CD8-positive, alpha-beta T cell (primary cell): ENCODE measurements at regions of chr13 and their contacts with region 1.

Region 1: GRCh38 chr13:113742000-113742441 is 17.0 kb upstream of the TMEM255B start:
- DNase-seq: peak in 6 of 9 experiments; percentile 8 to 58 (median 32)
- ATAC-seq: peak; percentile 41
- H3K4me3 ChIP-seq: peak overlapping the region in 1 of 2 experiments; percentile 33
- H3K4me3 Mint-ChIP-seq: peak overlapping the region; percentile 64
- H3K27ac ChIP-seq: no peak overlapping the region
- H3K27ac Mint-ChIP-seq: peak overlapping the region; percentile 79
- H3K4me1 ChIP-seq: peaks cover 24% of the 10 kb centered on the region
- H3K4me1 Mint-ChIP-seq: peaks cover 25% of the 10 kb centered on the region
- H3K27me3 ChIP-seq: peaks cover 10 to 18% of the 10 kb centered on the region in 2 experiments
- H3K27me3 Mint-ChIP-seq: peaks cover 17% of the 10 kb centered on the region
- CTCF ChIP-seq: peak; percentile 25

Region 2: GRCh38 chr13:113758651-113759524 is 16.9 kb after region 1 on chr13 and contains the start of gene TMEM255B:
- CTCF ChIA-PET with region 1: no interaction called
- POLR2A ChIA-PET with region 1: no interaction called
- intact Hi-C with region 1: loop called in 1 of 2 experiments (anchors 2 kb)
- DNase-seq: peak; percentile 48 to 82 (median 72)
- ATAC-seq: peak; percentile 92
- H3K4me3 ChIP-seq: peak within 1 kb of the TSS; percentile 48 to 67
- H3K4me3 Mint-ChIP-seq: peak within 1 kb of the TSS; percentile 86
- H3K27ac ChIP-seq: no peak within 1 kb of the TSS
- H3K27ac Mint-ChIP-seq: peak within 1 kb of the TSS; percentile 35
- H3K4me1 ChIP-seq: peaks cover 15% of the 10 kb centered on the region
- H3K4me1 Mint-ChIP-seq: peaks cover 16% of the 10 kb centered on the region
- H3K27me3 ChIP-seq: peaks cover 8 to 29% of the 10 kb centered on the region in 2 experiments
- H3K27me3 Mint-ChIP-seq: peaks cover 51% of the 10 kb centered on the region
- CTCF ChIP-seq: peak; percentile 50
- total RNA-seq, gene TMEM255B: 0.60 to 0.83 TPM